Heart right ventricle (tissue), 16 donors: ENCODE measurements at regions of chr5 and their contacts with region 1.

Region 1: GRCh38 chr5:132495667-132496190 is 5.2 kb upstream of the IRF1 start:
- DNase-seq: peak; percentile 93 to 94
- ATAC-seq: peak; percentile 72 to 82 (median 79)
- H3K4me3 ChIP-seq: peak overlapping the region; percentile 50 to 88 (median 76)
- H3K27ac ChIP-seq: peak overlapping the region; percentile 84 to 100 (median 94)
- H3K4me1 ChIP-seq: peaks cover 18 to 82% (median 51%) of the 10 kb centered on the region in 9 donors
- H3K27me3 ChIP-seq: no peaks in the 10 kb centered on the region
- CTCF ChIP-seq: peak in 4 of 9 donors; percentile 8 to 41 (median 26)

Region 2: GRCh38 chr5:132396589-132397031 is 99.1 kb before region 1 on chr5:
- intact Hi-C with region 1: no loop called
- DNase-seq: no peak
- ATAC-seq: no peak
- H3K4me3 ChIP-seq: no peak overlapping the region
- H3K27ac ChIP-seq: no peak overlapping the region
- H3K4me1 ChIP-seq: no peaks in the 10 kb centered on the region
- H3K27me3 ChIP-seq: no peaks in the 10 kb centered on the region
- CTCF ChIP-seq: no peak

Region 3: DNA sequence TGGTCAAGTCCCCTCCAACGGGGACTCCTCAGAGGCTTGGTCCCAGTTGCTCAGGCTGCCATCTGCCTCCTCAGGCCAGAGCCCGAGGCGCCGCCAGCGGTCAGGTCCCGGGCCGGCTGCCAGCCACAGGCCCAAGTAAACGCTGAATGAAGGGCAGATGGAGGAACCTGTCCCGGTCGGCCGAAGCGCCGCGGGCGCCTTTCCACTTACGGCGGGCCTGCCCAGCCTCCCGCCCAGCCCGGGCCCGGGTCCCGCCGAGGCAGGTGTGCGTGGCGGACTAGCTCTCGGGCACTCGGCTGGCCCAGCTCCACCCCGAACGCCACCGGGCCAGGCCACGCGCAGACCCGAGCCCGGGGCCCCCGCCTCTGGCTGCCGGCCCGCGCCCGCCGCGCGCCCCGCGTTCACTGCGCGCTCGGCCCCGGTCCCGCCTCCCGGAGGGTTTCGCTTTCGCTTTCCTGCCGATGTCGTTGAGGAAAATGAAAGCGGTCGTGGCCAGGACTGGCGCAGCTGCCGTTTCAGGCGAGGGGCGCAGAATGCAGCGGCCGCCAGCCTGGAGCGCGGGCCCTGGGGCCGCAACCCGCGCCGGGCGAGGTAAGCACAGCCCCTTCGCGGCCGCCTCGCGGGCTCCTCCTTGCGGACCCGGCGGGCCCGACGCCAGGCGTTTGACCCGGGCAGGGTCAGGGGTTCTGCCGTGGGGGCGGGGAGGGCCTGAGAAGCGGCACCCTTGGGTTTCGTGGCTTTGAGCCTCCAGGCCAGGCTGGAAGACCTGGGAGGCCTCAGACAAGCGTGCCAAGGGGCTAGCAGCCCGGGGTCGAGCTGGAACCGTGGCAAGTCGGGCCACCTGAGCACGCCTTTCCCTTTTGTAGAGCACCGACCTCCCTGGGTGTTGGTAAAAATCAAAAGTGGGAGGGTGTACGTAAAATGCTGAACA is 85.0 kb before region 1 on chr5:
- intact Hi-C with region 1: loop called in 4 of 10 experiments (anchors 2 to 5 kb)
- DNase-seq: peak; percentile 86 to 88
- ATAC-seq: peak; percentile 78 to 88 (median 82)
- H3K4me3 ChIP-seq: peak overlapping the region; percentile 64 to 87 (median 82)
- H3K27ac ChIP-seq: peak overlapping the region; percentile 97 to 100 (median 99)
- H3K4me1 ChIP-seq: peaks cover 0 to 76% (median 71%) of the 10 kb centered on the region in 9 donors
- H3K27me3 ChIP-seq: no peaks in the 10 kb centered on the region
- CTCF ChIP-seq: peak; percentile 43 to 77 (median 73)

Region 4: DNA sequence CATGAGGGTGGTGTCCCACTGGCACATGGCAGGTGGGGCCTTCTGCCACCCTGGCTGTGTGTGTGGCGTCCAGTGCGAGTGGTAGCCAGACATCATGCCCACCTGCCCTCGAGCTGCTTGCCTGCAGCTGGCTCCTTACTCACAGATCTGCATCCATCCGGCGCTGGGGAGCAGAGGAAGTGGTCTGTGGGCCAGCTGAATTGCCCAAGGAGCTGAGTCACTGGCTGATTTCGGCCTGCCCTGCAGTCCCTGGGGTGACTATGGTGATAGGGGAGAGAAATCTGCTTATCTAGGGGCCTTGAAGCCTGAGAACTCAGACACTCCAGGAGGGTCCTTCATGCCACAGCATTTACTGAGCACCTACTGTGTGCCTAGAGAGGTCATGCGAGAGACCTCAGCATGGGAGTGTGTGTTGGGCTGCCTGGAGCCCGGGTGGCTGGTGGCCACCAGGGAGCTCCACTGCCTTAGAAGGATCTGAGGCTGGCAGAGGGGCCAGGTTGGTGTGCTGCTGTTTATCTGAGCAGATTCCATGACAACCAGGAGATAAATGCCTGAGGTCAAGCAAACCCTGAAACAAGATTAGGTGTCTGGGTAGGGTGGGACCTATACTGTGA is 69.1 kb before region 1 on chr5:
- intact Hi-C with region 1: loop called in 3 of 10 experiments (anchors 2 to 5 kb)
- DNase-seq: peak; percentile 59 to 67
- ATAC-seq: peak; percentile 26 to 75 (median 48)
- H3K4me3 ChIP-seq: peak overlapping the region in 1 of 10 donors; percentile 32
- H3K27ac ChIP-seq: peak overlapping the region in 9 of 10 donors; percentile 64 to 100 (median 86)
- H3K4me1 ChIP-seq: peaks cover 58 to 100% (median 97%) of the 10 kb centered on the region in 9 donors
- H3K27me3 ChIP-seq: no peaks in the 10 kb centered on the region
- CTCF ChIP-seq: peak in 7 of 9 donors; percentile 5 to 50 (median 39)